Activated T-helper 1 cell treated with anti-CD3 and anti-CD28 coated beads, Interleukin-12 subunit alpha, Interleukin-12 subunit beta, Interleukin-2, Interleukin-4 antibody, amounts not matched to agents 30 ng/mL and 10 ng/mL and 1 ng/mL, durations not matched to agents 14 hours and 24 hours and 36 hours (primary cell): ENCODE measurements at regions of chr11 and their contacts with region 1.

Region 1: DNA sequence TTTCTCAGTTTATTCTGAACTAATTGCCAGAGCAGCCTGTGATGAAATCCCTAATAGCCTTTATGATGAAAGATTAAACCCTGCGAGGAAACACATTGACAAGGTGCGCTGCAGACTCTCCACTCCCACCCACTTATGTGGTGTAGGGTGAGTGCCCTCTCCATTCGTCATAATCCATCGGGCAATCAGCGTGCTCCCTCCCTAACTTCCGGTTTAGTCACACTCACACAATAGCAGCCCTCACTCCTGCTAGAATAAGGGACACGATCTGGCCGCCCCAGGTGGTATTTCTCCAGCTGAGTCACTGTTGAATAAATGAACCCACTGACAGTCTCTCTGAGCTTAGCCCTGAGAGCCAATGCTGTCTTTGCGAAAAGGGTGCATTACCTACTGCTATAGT is 188.3 kb downstream of the OPCML start:
- DNase-seq: no peak
- H3K4me3 Mint-ChIP-seq: no peak overlapping the region
- H3K27ac Mint-ChIP-seq: no peak overlapping the region
- H3K4me1 Mint-ChIP-seq: no peaks in the 10 kb centered on the region
- H3K27me3 Mint-ChIP-seq: no peaks in the 10 kb centered on the region

Region 2: DNA sequence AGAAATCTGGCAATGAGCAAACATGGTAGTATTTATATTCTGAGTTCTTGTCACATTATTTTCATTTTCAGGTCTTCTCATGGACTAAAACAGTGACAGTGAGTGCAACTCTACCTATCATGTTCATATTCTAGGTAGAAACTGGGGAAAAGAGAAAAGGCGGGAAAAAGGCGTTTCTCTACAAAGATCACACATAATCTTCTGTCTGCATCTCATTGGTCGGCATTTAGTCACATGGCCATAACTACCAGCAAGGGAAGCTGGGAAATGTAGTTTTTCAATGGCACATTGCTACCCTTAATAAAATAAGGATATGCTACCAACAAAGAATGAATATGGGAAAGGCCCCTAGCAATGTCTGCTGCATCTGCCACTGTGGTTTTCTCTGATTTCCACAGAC is 1125.7 kb after region 1 on chr11:
- intact Hi-C with region 1: loop called (anchors 5 kb)
- DNase-seq: no peak
- H3K4me3 Mint-ChIP-seq: no peak overlapping the region
- H3K27ac Mint-ChIP-seq: no peak overlapping the region
- H3K4me1 Mint-ChIP-seq: no peaks in the 10 kb centered on the region
- H3K27me3 Mint-ChIP-seq: peaks cover 18% of the 10 kb centered on the region